Calu3 (cell line): ENCODE measurements at regions of chr4 and their contacts with region 1.

Region 1: GRCh38 chr4:129362674-129363274 is 266.8 kb downstream of the C4orf33 start:
- DNase-seq: peak; percentile 56
- H3K4me3 Mint-ChIP-seq: no peak overlapping the region
- H3K27ac Mint-ChIP-seq: no peak overlapping the region
- H3K4me1 Mint-ChIP-seq: peaks cover 18% of the 10 kb centered on the region
- H3K27me3 Mint-ChIP-seq: peaks cover 16% of the 10 kb centered on the region
- CTCF ChIP-seq: peak; percentile 62

Region 2: GRCh38 chr4:129420637-129421036 is 57.9 kb after region 1 on chr4:
- CTCF ChIA-PET with region 1: no interaction called
- intact Hi-C with region 1: no loop called
- DNase-seq: no peak
- H3K4me3 Mint-ChIP-seq: no peak overlapping the region
- H3K27ac Mint-ChIP-seq: no peak overlapping the region
- H3K4me1 Mint-ChIP-seq: no peaks in the 10 kb centered on the region
- H3K27me3 Mint-ChIP-seq: no peaks in the 10 kb centered on the region
- CTCF ChIP-seq: no peak

Region 3: GRCh38 chr4:129526814-129527213 is 164.0 kb after region 1 on chr4:
- CTCF ChIA-PET with region 1: no interaction called
- intact Hi-C with region 1: loop called (anchors 5 kb)
- DNase-seq: no peak
- H3K4me3 Mint-ChIP-seq: no peak overlapping the region
- H3K27ac Mint-ChIP-seq: no peak overlapping the region
- H3K4me1 Mint-ChIP-seq: no peaks in the 10 kb centered on the region
- H3K27me3 Mint-ChIP-seq: no peaks in the 10 kb centered on the region
- CTCF ChIP-seq: no peak

Region 4: GRCh38 chr4:129641179-129641578 is 278.4 kb after region 1 on chr4:
- CTCF ChIA-PET with region 1: no interaction called
- intact Hi-C with region 1: loop called (anchors 2 kb)
- DNase-seq: peak; percentile 57
- H3K4me3 Mint-ChIP-seq: no peak overlapping the region
- H3K27ac Mint-ChIP-seq: no peak overlapping the region
- H3K4me1 Mint-ChIP-seq: no peaks in the 10 kb centered on the region
- H3K27me3 Mint-ChIP-seq: no peaks in the 10 kb centered on the region
- CTCF ChIP-seq: peak; percentile 62

Region 5: GRCh38 chr4:129929052-129929451 is 566.3 kb after region 1 on chr4:
- CTCF ChIA-PET with region 1: no interaction called
- intact Hi-C with region 1: loop called (anchors 10 kb)
- DNase-seq: peak; percentile 3
- H3K4me3 Mint-ChIP-seq: no peak overlapping the region
- H3K27ac Mint-ChIP-seq: no peak overlapping the region
- H3K4me1 Mint-ChIP-seq: no peaks in the 10 kb centered on the region
- H3K27me3 Mint-ChIP-seq: no peaks in the 10 kb centered on the region
- CTCF ChIP-seq: no peak

Region 6: GRCh38 chr4:130233377-130234047 is 870.7 kb after region 1 on chr4:
- CTCF ChIA-PET with region 1: no interaction called
- intact Hi-C with region 1: loop called (anchors 10 kb)
- DNase-seq: no peak
- H3K4me3 Mint-ChIP-seq: peak overlapping the region; percentile 31
- H3K27ac Mint-ChIP-seq: peak overlapping the region; percentile 35
- H3K4me1 Mint-ChIP-seq: no peaks in the 10 kb centered on the region
- H3K27me3 Mint-ChIP-seq: no peaks in the 10 kb centered on the region
- CTCF ChIP-seq: no peak

Region 7: DNA sequence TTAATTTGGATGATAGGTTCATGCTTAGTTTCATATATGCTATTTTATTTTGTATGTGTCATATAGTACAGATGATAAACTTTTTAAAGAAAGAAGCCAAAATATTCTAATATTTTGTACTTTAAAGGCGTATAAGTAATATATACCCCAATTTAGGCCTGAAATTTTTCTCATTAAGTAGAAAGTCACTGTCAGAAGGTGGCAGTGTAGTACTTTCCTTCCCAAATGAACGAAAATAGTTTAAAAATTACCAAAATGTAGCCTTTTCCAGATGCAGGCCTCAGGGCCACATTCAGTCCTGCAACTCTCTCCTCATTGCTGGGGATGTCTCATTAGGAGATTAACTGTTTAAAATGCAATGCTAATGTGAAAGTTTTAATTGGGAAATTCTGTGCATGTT is 996.8 kb after region 1 on chr4:
- CTCF ChIA-PET with region 1: no interaction called
- intact Hi-C with region 1: loop called (anchors 10 kb)
- DNase-seq: no peak
- H3K4me3 Mint-ChIP-seq: no peak overlapping the region
- H3K27ac Mint-ChIP-seq: no peak overlapping the region
- H3K4me1 Mint-ChIP-seq: no peaks in the 10 kb centered on the region
- H3K27me3 Mint-ChIP-seq: no peaks in the 10 kb centered on the region
- CTCF ChIP-seq: no peak

Region 8: DNA sequence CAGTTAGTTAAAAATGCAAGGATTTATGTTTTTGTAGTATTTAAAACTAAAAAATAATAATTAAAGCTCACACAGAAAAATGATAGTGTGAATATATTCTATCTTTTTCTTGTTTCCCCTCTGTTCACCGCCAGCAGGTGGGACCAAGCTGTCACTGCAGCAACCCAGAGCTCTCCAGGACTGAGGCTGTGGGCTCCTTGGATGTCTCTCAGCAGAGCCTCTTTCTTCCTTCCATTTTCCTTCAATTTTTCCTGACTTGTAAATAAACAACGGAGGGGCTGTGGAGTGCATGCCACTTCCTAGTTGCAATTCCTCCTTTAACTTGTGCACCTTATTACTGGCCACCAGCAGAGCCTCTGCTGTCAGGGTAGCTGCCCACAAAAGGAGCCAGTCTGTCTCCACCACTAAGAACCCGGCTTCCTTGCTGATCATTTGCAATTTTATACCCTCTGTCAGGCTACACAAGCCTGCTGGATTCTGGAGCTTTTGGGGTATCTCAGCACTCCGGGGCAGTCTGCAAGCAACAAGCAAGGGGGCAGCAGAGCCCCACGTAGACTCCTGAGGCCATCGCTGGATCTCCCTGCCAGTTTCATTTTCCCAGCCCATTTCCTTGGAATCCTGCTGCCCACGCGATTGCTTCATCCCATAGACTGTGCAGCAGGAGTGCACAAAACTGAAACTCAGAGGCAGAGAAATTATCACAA is 1200.6 kb after region 1 on chr4:
- CTCF ChIA-PET with region 1: no interaction called
- intact Hi-C with region 1: loop called (anchors 10 kb)
- DNase-seq: peak; percentile 70
- H3K4me3 Mint-ChIP-seq: peak overlapping the region; percentile 67
- H3K27ac Mint-ChIP-seq: no peak overlapping the region
- H3K4me1 Mint-ChIP-seq: peaks cover 23% of the 10 kb centered on the region
- H3K27me3 Mint-ChIP-seq: no peaks in the 10 kb centered on the region
- CTCF ChIP-seq: peak; percentile 43